ENCODE measurements at regions of chr9 and their contacts with region 1.

Region 1: GRCh38 chr9:137578518-137579258 is at the start of gene DPH7:
- DNase-seq: peak; percentile 92
- ATAC-seq: peak; percentile 97
- H3K4me3 ChIP-seq: peak within 1 kb of the TSS in 4 of 5 experiments; percentile 63 to 92 (median 90)
- H3K4me3 Mint-ChIP-seq: peak within 1 kb of the TSS; percentile 80
- H3K27ac ChIP-seq: peak within 1 kb of the TSS in 1 of 2 donors; percentile 78
- H3K27ac Mint-ChIP-seq: peak within 1 kb of the TSS; percentile 26
- H3K4me1 ChIP-seq: peaks cover 18 to 30% of the 10 kb centered on the region in 2 donors
- H3K4me1 Mint-ChIP-seq: peaks cover 26% of the 10 kb centered on the region
- H3K27me3 ChIP-seq: no peaks in the 10 kb centered on the region
- H3K27me3 Mint-ChIP-seq: no peaks in the 10 kb centered on the region
- CTCF ChIP-seq: peak; percentile 94
- total RNA-seq, gene DPH7: 64.7 and 69.1 TPM in 2 replicates

Region 2: DNA sequence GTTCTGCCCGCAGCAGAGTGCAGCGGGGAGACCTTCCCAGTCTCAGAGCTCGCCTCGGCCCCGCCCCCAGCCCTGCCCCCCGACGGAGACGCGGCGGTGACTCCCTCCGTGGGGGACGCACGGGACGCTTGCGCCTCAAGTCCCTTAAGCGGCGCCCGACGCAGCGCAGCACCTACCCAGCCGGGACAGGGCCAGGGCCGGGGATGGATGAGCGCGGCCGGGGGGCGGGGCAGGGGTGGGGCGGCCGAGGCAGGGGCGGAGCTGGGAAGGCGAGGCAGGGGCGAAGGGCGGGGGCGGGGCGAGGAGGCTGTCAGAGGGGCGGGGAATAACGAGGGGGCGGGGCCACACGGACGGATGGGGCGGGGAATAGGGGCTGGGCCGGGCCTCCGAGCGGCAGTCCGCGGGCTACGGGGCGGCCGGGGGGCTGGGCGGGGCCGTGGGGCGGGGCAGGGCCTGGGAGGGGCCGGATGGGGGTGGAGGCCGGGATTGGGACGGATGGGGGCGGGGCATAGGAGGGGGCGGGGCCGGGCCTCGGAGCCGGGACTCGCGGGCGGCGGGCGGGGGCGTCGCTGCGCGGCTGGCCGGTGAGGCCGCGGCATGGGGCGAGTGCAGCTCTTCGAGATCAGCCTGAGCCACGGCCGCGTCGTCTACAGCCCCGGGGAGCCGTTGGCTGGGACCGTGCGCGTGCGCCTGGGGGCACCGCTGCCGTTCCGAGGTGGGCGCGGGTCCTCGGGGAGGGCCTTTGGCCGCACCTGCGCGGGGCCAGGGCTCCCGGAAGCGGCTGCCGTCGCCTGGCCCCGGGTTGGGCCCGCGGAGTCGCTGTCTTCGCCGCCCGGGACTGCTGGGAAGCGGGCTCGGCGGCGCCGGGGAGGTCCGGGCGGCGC is 26.7 kb after region 1 on chr9 and contains the start of gene ARRDC1:
- CTCF ChIA-PET with region 1: interaction called, 4 read pairs
- POLR2A ChIA-PET with region 1: interaction called, 3 read pairs
- intact Hi-C with region 1: loop called (anchors 1 kb)
- DNase-seq: peak; percentile 93
- ATAC-seq: peak; percentile 86
- H3K4me3 ChIP-seq: peak within 1 kb of the TSS; percentile 34 to 74 (median 60)
- H3K4me3 Mint-ChIP-seq: peak within 1 kb of the TSS; percentile 86
- H3K27ac ChIP-seq: peak within 1 kb of the TSS in 1 of 2 donors; percentile 61
- H3K27ac Mint-ChIP-seq: peak within 1 kb of the TSS; percentile 65
- H3K4me1 ChIP-seq: peaks cover 12 to 25% of the 10 kb centered on the region in 2 donors
- H3K4me1 Mint-ChIP-seq: peaks cover 21% of the 10 kb centered on the region
- H3K27me3 ChIP-seq: no peaks in the 10 kb centered on the region
- H3K27me3 Mint-ChIP-seq: no peaks in the 10 kb centered on the region
- CTCF ChIP-seq: no peak
- total RNA-seq, gene ARRDC1: 89.2 and 96.6 TPM in 2 replicates

Region 3: DNA sequence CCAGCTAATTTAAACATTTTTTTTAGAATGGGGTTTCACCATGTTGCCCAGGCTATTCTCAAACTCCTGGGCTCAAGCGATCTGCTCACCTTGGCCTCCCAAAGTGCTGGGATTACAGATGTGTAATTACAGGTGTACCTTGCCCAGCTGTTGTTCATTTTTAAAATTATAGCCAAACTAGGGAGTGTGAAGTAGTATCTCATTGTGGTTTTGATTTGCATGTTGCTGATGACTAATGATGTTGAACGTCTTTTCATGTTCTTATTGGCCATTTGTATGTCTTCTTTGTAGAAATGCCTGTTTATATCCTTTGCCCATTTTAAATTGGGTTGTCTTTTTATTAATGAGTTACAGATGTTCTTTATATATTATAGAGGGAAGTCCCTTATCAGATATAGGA is 71.6 kb after region 1 on chr9:
- CTCF ChIA-PET with region 1: no interaction called
- POLR2A ChIA-PET with region 1: no interaction called
- intact Hi-C with region 1: no loop called
- DNase-seq: no peak
- ATAC-seq: no peak
- H3K4me3 ChIP-seq: no peak overlapping the region
- H3K4me3 Mint-ChIP-seq: no peak overlapping the region
- H3K27ac ChIP-seq: no peak overlapping the region
- H3K27ac Mint-ChIP-seq: no peak overlapping the region
- H3K4me1 ChIP-seq: peaks cover 21 to 28% of the 10 kb centered on the region in 2 donors
- H3K4me1 Mint-ChIP-seq: peaks cover 49% of the 10 kb centered on the region
- H3K27me3 ChIP-seq: no peaks in the 10 kb centered on the region
- H3K27me3 Mint-ChIP-seq: no peaks in the 10 kb centered on the region
- CTCF ChIP-seq: no peak

Region 4: DNA sequence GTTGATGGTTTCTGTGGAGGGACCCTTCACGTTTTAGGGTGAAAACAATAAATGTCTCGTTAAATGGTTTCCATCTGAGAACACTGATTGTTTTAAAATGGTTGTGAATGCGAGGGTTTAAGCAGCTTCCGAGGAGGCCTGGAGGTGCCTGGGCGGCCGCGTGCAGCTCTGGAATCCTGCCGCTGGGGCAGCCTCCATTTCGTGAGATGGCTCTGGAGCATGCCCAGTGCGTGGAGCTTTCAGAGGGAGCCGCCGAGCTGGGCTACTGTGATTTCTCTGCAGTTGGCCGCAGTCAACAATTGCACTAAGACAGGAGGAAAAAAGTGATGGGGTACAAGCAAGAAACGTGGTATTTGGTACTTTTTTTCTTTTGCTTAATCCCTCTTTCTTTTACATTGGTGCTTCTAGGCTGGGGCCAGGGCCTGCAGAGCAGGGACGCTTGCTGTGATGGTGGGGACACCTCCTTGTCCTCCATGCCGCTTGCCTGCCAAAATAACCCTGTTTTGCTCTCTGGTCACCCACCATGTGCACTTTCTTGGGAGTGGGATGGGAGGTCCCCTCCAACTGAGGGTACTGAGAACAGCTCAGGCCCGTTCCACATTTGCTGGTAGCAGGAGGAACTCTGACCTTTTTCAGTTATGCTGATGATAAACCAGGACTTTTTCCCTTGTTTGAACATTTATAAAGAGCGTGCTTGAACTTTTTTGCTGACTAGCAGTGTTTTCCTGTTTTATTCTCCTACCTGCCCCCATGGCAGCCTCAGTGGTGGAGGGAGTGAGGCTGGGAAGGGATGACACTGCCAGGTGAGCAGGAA is 87.2 kb after region 1 on chr9:
- CTCF ChIA-PET with region 1: no interaction called
- POLR2A ChIA-PET with region 1: no interaction called
- intact Hi-C with region 1: no loop called
- DNase-seq: no peak
- ATAC-seq: no peak
- H3K4me3 ChIP-seq: no peak overlapping the region
- H3K4me3 Mint-ChIP-seq: no peak overlapping the region
- H3K27ac ChIP-seq: no peak overlapping the region
- H3K27ac Mint-ChIP-seq: no peak overlapping the region
- H3K4me1 ChIP-seq: peaks cover 22 to 35% of the 10 kb centered on the region in 2 donors
- H3K4me1 Mint-ChIP-seq: peaks cover 53% of the 10 kb centered on the region
- H3K27me3 ChIP-seq: no peaks in the 10 kb centered on the region
- H3K27me3 Mint-ChIP-seq: no peaks in the 10 kb centered on the region
- CTCF ChIP-seq: no peak

Region 5: GRCh38 chr9:137788561-137789294 is 210.0 kb after region 1 on chr9:
- CTCF ChIA-PET with region 1: no interaction called
- POLR2A ChIA-PET with region 1: no interaction called
- intact Hi-C with region 1: no loop called
- DNase-seq: no peak
- ATAC-seq: peak; percentile 31
- H3K4me3 ChIP-seq: no peak overlapping the region
- H3K4me3 Mint-ChIP-seq: no peak overlapping the region
- H3K27ac ChIP-seq: no peak overlapping the region
- H3K27ac Mint-ChIP-seq: peak overlapping the region; percentile 15
- H3K4me1 ChIP-seq: peaks cover 0 to 3% of the 10 kb centered on the region in 2 donors
- H3K4me1 Mint-ChIP-seq: peaks cover 10% of the 10 kb centered on the region
- H3K27me3 ChIP-seq: no peaks in the 10 kb centered on the region
- H3K27me3 Mint-ChIP-seq: no peaks in the 10 kb centered on the region
- CTCF ChIP-seq: no peak

Measured in B cell (primary cell).